ENCODE measurements at regions of chr9 and their contacts with region 1.

Region 1: DNA sequence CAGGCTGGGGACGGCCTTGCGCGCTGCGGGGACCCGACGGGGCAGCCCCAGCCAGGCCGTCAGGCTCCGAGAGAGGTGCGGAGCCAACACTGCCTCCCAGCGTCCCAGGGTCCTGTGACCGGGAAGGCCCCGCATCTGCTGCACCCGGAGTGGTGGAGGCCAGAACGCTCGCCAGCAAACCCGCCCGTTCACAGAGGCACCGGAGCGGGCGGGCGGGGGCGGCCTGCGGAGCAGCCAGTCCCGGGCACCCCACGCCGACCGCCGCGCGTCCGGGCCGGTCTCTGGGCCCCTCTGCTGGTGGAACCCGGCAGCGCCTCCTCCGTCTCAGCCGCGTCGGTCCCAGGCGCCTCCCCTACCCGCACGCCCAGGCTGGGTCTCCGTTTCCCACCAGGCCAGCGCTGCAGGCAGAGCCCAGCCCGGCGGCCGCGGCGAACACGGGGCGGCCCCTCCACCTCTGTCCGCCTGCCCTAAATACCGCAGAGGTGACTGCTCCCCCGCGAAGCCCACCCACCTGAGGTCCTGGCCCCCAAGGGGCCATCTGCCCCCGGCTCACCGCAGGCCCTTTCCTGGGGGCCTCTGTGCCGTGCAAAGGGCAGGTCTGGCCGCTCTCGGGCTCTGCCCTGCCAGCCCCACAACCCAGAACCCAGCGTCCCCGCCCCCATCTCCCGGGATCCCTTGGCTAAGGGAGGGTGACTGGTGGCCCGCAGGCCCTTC is 15.9 kb downstream of the EXD3 start:
- DNase-seq: peak; percentile 17
- H3K4me3 ChIP-seq: no peak overlapping the region
- H3K27ac ChIP-seq: no peak overlapping the region
- H3K4me1 ChIP-seq: peaks cover 23% of the 10 kb centered on the region
- H3K27me3 ChIP-seq: peaks cover 4% of the 10 kb centered on the region
- CTCF ChIP-seq: peak; percentile 30 to 49

Region 2: GRCh38 chr9:137176302-137177182 is 230.5 kb before region 1 on chr9:
- CTCF ChIA-PET with region 1: no interaction called
- dilution Hi-C with region 1: loop called (anchors 10 kb)
- in situ Hi-C with region 1: no loop called
- intact Hi-C with region 1: no loop called
- DNase-seq: no peak
- H3K4me3 ChIP-seq: no peak overlapping the region
- H3K27ac ChIP-seq: no peak overlapping the region
- H3K4me1 ChIP-seq: peaks cover 6% of the 10 kb centered on the region
- H3K27me3 ChIP-seq: peaks cover 4% of the 10 kb centered on the region
- CTCF ChIP-seq: peak; percentile 68 to 71

Region 3: GRCh38 chr9:137353223-137354152 is 53.5 kb before region 1 on chr9:
- CTCF ChIA-PET with region 1: no interaction called
- dilution Hi-C with region 1: no loop called
- in situ Hi-C with region 1: no loop called
- intact Hi-C with region 1: no loop called
- DNase-seq: no peak
- H3K4me3 ChIP-seq: no peak overlapping the region
- H3K27ac ChIP-seq: no peak overlapping the region
- H3K4me1 ChIP-seq: no peaks in the 10 kb centered on the region
- H3K27me3 ChIP-seq: no peaks in the 10 kb centered on the region
- CTCF ChIP-seq: no peak

Region 4: GRCh38 chr9:137502008-137502913 is 95.2 kb after region 1 on chr9:
- CTCF ChIA-PET with region 1: no interaction called
- dilution Hi-C with region 1: loop called (anchors 10 kb)
- in situ Hi-C with region 1: no loop called
- intact Hi-C with region 1: no loop called
- DNase-seq: no peak
- H3K4me3 ChIP-seq: no peak overlapping the region
- H3K27ac ChIP-seq: no peak overlapping the region
- H3K4me1 ChIP-seq: no peaks in the 10 kb centered on the region
- H3K27me3 ChIP-seq: no peaks in the 10 kb centered on the region
- CTCF ChIP-seq: no peak